Activated naive CD4-positive, alpha-beta T cell treated with anti-CD3 and anti-CD28 coated beads for 36 hours (primary cell): ENCODE measurements at regions of chr19 and their contacts with region 1.

Region 1: GRCh38 chr19:48588670-48589399 is 17.7 kb upstream of the SPACA4 start:
- DNase-seq: peak; percentile 91
- H3K4me3 Mint-ChIP-seq: peak overlapping the region; percentile 66
- H3K27ac Mint-ChIP-seq: peak overlapping the region; percentile 16
- H3K4me1 Mint-ChIP-seq: peaks cover 11% of the 10 kb centered on the region
- H3K27me3 Mint-ChIP-seq: peaks cover 4% of the 10 kb centered on the region

Region 2: GRCh38 chr19:47848823-47849473 is 739.9 kb before region 1 on chr19:
- CTCF ChIA-PET with region 1: interaction called, 11 read pairs
- intact Hi-C with region 1: no loop called
- DNase-seq: peak; percentile 67
- H3K4me3 Mint-ChIP-seq: peak overlapping the region; percentile 44
- H3K27ac Mint-ChIP-seq: no peak overlapping the region
- H3K4me1 Mint-ChIP-seq: peaks cover 14% of the 10 kb centered on the region
- H3K27me3 Mint-ChIP-seq: peaks cover 41% of the 10 kb centered on the region

Region 3: DNA sequence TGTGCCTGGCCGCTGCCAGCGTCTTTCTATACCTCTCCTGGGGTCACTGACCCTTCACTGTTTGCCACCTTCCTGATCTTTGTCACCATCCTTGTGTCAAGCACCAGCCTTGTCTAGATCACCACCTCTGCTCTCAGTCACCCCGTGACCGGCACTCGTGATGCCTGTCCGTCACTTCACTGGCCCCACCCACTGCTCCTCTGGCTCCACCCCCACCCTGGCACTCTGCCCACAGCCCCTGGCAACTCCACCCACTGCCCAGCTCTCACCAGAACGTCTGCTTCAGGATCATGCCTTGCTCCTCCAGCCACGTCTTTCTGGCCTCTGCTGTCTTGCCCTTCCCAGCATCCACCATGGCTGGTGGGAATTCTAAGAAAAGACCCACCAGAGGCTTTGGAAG is 453.4 kb before region 1 on chr19:
- CTCF ChIA-PET with region 1: no interaction called
- intact Hi-C with region 1: no loop called
- DNase-seq: peak; percentile 41
- H3K4me3 Mint-ChIP-seq: no peak overlapping the region
- H3K27ac Mint-ChIP-seq: no peak overlapping the region
- H3K4me1 Mint-ChIP-seq: no peaks in the 10 kb centered on the region
- H3K27me3 Mint-ChIP-seq: no peaks in the 10 kb centered on the region

Region 4: GRCh38 chr19:48391107-48391986 is 197.5 kb before region 1 on chr19 and contains the start of gene KDELR1:
- CTCF ChIA-PET with region 1: interaction called, 10 read pairs
- intact Hi-C with region 1: loop called (anchors 5 kb)
- DNase-seq: peak; percentile 73
- H3K4me3 Mint-ChIP-seq: peak within 1 kb of the TSS; percentile 94
- H3K27ac Mint-ChIP-seq: peak within 1 kb of the TSS; percentile 90
- H3K4me1 Mint-ChIP-seq: peaks cover 36% of the 10 kb centered on the region
- H3K27me3 Mint-ChIP-seq: peaks cover 27% of the 10 kb centered on the region
- total RNA-seq, gene KDELR1: 81.5 to 83.8 TPM

Region 5: GRCh38 chr19:48501496-48502350 is 87.1 kb before region 1 on chr19:
- CTCF ChIA-PET with region 1: interaction called, 83 read pairs
- intact Hi-C with region 1: loop called (anchors 1 kb)
- DNase-seq: peak; percentile 82
- H3K4me3 Mint-ChIP-seq: peak overlapping the region; percentile 74
- H3K27ac Mint-ChIP-seq: peak overlapping the region; percentile 80
- H3K4me1 Mint-ChIP-seq: peaks cover 22% of the 10 kb centered on the region
- H3K27me3 Mint-ChIP-seq: peaks cover 7% of the 10 kb centered on the region

Region 6: DNA sequence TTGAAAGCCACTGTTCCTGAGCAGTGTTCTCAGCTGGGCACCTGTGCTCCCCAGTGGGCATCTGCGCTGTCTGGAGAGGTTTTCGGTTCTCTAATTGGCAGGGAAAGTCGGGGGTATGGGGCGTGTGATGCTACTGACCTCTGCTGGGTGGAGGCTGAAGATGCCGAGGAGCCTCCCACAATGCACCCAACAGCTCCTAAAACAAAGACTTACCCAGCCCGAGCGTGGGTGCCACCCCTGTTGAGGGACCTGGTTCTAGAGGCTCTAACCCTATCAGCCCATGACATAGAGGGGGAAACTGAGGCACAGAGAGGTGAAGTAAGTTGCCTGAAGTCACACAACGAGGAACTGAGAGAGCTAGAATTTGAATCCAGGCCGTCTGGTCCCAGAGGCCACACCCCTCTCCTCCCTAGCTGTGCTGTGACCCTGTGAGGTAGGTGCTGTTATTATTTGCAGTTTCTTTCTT is 20.0 kb after region 1 on chr19:
- CTCF ChIA-PET with region 1: interaction called, 24 read pairs
- intact Hi-C with region 1: loop called (anchors 2 kb)
- DNase-seq: peak; percentile 64
- H3K4me3 Mint-ChIP-seq: no peak overlapping the region
- H3K27ac Mint-ChIP-seq: no peak overlapping the region
- H3K4me1 Mint-ChIP-seq: peaks cover 2% of the 10 kb centered on the region
- H3K27me3 Mint-ChIP-seq: no peaks in the 10 kb centered on the region